A673 (cell line): ENCODE measurements at regions of chr13 and their contacts with region 1.

Region 1: GRCh38 chr13:112013665-112014064 is 53.3 kb upstream of the SOX1 start:
- DNase-seq: no peak
- H3K4me3 ChIP-seq: no peak overlapping the region
- H3K27ac ChIP-seq: no peak overlapping the region
- H3K4me1 ChIP-seq: no peaks in the 10 kb centered on the region
- H3K27me3 ChIP-seq: peaks cover 7% of the 10 kb centered on the region
- CTCF ChIP-seq: no peak

Region 2: GRCh38 chr13:112001571-112001970 is 12.1 kb before region 1 on chr13:
- CTCF ChIA-PET with region 1: no interaction called
- POLR2A ChIA-PET with region 1: interaction called, 11 read pairs
- intact Hi-C with region 1: no loop called
- DNase-seq: no peak
- H3K4me3 ChIP-seq: no peak overlapping the region
- H3K27ac ChIP-seq: no peak overlapping the region
- H3K4me1 ChIP-seq: no peaks in the 10 kb centered on the region
- H3K27me3 ChIP-seq: peaks cover 19% of the 10 kb centered on the region
- CTCF ChIP-seq: no peak